ENCODE measurements at regions of chr7 and their contacts with region 1.

Region 1: GRCh38 chr7:74068393-74069085 is 15.1 kb upstream of the LIMK1 start:
- DNase-seq: no peak
- ATAC-seq: no peak
- H3K4me3 Mint-ChIP-seq: no peak overlapping the region
- H3K27ac Mint-ChIP-seq: no peak overlapping the region
- H3K4me1 Mint-ChIP-seq: peaks cover 7% of the 10 kb centered on the region
- H3K27me3 Mint-ChIP-seq: no peaks in the 10 kb centered on the region

Region 2: DNA sequence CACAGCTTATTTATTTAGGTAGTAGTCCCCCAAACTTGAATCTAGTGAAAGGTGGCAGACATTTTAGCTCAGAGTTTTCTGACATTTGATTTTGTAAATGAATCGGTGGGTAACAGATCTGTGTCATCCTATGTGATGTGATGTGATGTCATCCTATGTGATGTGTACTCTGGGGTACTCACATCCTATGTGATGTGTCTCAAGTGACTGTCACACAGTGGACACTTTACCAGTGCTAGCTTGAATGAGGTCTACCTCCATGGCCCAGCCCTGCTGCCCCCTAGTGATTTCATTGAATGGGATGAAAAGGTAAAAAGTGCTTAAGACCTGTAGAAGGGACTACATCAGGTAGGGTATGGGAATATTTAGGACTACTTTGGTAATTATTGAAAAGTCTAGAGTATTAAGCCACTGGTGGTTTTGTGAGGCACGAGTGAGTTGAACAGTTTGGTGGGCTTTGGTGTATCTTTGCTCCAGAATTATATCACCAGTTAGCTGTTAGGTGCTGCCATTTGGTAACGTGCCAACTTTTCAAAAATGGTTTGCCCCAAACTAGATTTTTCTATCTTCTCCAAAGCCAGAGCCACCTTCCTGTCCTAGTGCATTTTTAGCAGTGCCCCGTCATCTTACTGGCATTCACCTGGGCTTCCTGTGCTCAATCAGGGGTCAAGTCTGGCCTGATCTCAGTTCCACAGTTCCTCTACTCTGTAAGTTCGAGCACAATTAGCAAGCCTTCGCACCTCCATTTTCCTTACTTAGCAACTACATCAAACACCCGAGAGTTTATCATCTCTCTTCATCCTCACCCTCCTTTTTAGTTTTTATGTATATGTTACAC is 115.3 kb after region 1 on chr7:
- CTCF ChIA-PET with region 1: interaction called, 24 read pairs
- POLR2A ChIA-PET with region 1: interaction called, 3 read pairs
- DNase-seq: peak; percentile 42
- ATAC-seq: peak; percentile 68
- H3K4me3 Mint-ChIP-seq: no peak overlapping the region
- H3K27ac Mint-ChIP-seq: peak overlapping the region; percentile 40
- H3K4me1 Mint-ChIP-seq: peaks cover 66% of the 10 kb centered on the region
- H3K27me3 Mint-ChIP-seq: no peaks in the 10 kb centered on the region

Region 3: DNA sequence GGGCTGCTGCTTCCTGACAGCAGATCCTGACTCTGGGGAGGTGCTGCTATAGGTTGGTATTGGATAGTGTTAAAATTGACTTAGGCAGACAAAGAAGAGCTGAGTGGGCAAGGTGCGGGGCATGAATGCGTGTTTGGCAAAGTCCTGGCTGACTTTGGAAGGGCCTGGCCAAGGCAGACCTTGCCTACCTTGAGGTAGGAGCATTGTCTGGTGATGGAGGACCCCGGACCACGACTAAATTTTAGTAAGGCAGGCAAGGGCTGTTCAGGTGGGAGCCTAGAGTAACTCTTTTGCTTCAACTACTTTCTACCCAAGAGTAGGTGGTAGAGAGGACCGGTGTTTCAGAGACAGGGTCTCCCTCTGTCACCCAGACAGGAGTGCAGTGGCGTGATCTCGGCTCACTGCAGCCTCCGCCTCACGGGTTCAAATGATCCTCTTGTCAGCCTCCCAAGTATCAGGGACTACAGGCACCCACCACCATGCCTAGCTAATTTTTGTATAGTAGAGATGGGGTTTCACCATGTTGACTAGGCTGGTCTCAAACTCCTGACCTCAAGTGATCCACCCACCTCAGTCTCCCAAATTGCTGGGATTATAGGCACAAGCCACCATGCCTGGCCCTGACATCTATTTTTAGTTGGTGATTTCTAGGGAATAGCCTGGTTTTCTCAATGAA is 129.0 kb after region 1 on chr7:
- CTCF ChIA-PET with region 1: interaction called, 10 read pairs
- POLR2A ChIA-PET with region 1: no interaction called
- DNase-seq: no peak
- ATAC-seq: no peak
- H3K4me3 Mint-ChIP-seq: no peak overlapping the region
- H3K27ac Mint-ChIP-seq: no peak overlapping the region
- H3K4me1 Mint-ChIP-seq: peaks cover 20% of the 10 kb centered on the region
- H3K27me3 Mint-ChIP-seq: no peaks in the 10 kb centered on the region

Measured in activated CD8-positive, alpha-beta T cell treated with anti-CD3 and anti-CD28 coated beads, Interleukin-2, amount 10 ng/mL, durations not matched to agents 7 days and 5 days (primary cell).